ENCODE measurements at regions of chr16 and their contacts with region 1.

Region 1: GRCh38 chr16:30445408-30446202 is at the start of gene SEPHS2:
- DNase-seq: peak; percentile 98
- ATAC-seq: peak; percentile 96 to 98 (median 97)
- H3K4me3 ChIP-seq: peak within 1 kb of the TSS; percentile 70 to 98 (median 80)
- H3K27ac ChIP-seq: peak within 1 kb of the TSS; percentile 69 to 100 (median 96)
- H3K4me1 ChIP-seq: peaks cover 2 to 39% (median 18%) of the 10 kb centered on the region in 9 donors
- H3K27me3 ChIP-seq: no peaks in the 10 kb centered on the region
- CTCF ChIP-seq: peak in 8 of 9 donors; percentile 18 to 74 (median 52)
- total RNA-seq, gene SEPHS2: 23.5 to 49.3 (median 29.3) TPM

Region 2: DNA sequence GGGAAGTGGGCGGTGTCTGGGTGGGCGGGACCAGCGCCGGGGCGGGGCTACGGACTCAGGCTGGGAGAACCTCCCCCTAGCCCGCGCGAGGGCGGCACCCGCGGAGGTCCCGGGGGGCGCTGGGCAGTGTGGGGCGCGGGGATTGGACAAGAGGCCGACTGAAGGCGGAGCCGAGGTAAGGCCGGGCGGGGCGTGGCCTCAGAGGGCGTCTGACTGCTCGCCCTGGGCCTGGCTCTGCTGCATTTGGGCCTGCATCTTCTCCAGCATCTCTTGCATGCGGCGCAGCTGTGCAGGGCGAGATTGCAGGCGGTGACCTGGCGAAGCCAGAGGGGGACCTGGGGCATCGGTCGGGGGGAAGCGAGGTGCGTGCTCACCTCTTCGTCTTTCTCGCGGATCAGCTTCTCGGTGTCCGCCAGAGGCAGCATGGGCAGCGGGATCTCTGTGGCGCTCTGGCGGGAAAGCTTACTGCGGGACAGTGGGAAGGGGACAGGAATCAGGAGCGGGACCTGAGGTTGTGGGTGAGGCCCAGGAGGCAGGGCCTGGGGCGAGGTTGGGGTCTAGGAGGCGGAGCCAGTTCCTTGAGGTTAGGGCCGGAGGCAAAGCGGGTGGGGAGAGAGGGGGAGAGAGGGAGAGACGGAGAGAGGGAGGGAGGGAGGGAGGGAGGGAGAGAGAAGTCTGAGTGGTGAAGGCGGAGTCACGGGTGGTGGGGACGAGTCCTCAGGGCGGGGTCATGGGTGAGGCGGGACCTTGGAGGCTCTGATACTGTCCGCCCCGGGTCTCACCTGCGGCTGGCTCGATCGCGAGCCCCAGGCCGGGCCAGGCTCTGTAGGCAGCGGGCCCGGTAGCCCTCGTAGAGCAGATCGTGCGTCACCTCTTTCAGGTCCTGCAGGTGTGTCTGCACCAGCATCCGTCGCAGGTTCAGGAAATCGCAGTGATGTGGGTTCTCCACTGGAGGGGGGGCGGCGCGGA is 67.1 kb before region 1 on chr16:
- intact Hi-C with region 1: no loop called
- DNase-seq: peak; percentile 99 to 100
- ATAC-seq: peak; percentile 96 to 98 (median 98)
- H3K4me3 ChIP-seq: peak overlapping the region; percentile 32 to 94 (median 68)
- H3K27ac ChIP-seq: peak overlapping the region; percentile 98 to 100 (median 99)
- H3K4me1 ChIP-seq: peaks cover 10 to 29% (median 15%) of the 10 kb centered on the region in 9 donors
- H3K27me3 ChIP-seq: no peaks in the 10 kb centered on the region
- CTCF ChIP-seq: peak in 4 of 9 donors; percentile 12 to 42 (median 22)

Region 3: DNA sequence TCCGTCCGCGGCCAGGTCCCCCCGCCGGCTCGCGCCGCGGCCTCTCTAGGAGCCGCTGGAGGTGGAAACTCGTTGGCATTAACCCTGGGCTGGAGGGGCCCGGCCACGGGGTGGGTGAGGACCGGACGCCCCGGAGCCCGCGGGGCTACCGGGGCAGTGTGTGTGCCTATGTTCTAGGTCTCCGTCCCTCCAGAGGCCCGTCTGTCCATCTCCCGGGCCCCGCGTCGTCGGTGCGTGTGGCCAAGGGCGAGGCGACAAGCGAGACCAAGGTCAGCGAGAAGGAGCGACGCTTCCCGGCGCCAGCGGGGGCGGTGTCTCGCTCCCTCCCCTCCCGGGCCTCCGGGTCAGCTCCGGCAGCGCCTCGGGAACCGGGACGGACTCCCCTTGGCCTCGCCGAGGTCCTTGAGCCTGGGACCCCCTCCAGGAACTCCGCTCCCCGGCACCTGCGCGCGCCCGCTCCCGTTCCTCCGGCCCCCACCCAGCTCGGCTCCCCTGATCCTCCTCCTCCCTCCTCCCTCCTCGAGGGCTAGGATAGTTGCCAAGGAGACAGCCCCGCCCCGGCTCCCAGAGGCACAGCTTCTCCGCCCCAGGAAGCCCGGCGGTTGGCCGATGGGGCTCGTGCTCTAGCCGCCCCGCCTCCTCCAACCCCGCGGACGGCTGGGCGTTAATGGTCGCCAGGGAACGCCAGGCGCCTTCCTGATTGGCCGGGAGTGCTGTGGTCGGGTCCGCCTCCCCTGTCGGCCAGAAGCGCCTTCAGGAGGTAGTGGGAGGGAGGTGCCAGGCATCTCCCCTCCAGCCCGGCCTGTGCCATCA is 81.4 kb after region 1 on chr16:
- intact Hi-C with region 1: loop called in 7 of 10 experiments (anchors 2 to 10 kb)
- DNase-seq: peak; percentile 98 to 99
- ATAC-seq: peak; percentile 92 to 97 (median 95)
- H3K4me3 ChIP-seq: peak overlapping the region; percentile 52 to 87 (median 71)
- H3K27ac ChIP-seq: peak overlapping the region; percentile 94 to 100 (median 99)
- H3K4me1 ChIP-seq: peaks cover 8 to 43% (median 38%) of the 10 kb centered on the region in 9 donors
- H3K27me3 ChIP-seq: no peaks in the 10 kb centered on the region
- CTCF ChIP-seq: peak in 6 of 9 donors; percentile 23 to 50 (median 33)

Region 4: DNA sequence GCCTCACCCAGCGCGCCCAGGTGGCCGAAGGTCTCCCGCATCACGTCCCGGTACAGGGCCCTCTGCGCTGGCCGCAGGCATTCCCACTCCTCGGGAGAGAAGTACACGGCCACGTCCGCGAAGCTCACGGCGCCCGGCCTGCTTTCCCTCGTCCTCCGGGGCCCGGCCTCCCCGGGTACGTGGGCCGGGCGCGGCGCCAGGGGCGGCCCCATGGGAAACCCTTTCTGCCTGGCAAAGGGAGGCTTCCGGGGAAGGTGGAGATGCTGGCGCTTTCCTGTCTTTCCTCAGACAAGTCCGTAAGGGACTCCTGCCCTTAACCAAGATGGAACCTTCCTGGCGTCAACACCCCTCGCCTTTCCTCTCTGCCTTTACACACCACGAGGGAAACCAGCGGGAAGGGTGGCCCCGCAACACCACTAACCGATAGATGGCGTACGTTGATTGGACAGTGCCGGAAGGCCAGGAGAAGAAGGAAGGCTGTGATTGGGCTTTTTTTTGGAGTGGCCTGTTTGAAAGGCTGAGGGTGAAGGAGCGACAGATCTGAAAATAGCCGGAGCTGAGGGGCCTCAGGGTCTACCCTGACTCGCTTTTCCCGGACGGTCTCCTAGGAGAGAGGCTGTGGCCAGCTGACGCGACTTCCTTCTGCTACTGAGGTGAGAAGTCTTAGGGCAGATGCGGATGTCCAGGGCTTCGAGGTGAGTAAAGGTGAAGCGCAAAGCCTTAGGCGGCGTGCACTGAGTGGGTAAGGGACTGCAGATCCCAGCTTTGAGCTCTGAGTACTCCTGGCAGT is 140.0 kb after region 1 on chr16 and contains the start of gene ZNF785:
- intact Hi-C with region 1: loop called in 1 of 10 experiments (anchors 5 kb)
- DNase-seq: peak; percentile 91 to 99
- ATAC-seq: peak; percentile 98 to 100 (median 99)
- H3K4me3 ChIP-seq: peak within 1 kb of the TSS; percentile 63 to 93 (median 78)
- H3K27ac ChIP-seq: peak within 1 kb of the TSS; percentile 67 to 97 (median 94)
- H3K4me1 ChIP-seq: peaks cover 3 to 26% (median 13%) of the 10 kb centered on the region in 9 donors
- H3K27me3 ChIP-seq: no peaks in the 10 kb centered on the region
- CTCF ChIP-seq: peak in 7 of 9 donors; percentile 19 to 54 (median 42)
- total RNA-seq, gene ZNF785: 2.8 to 8.4 (median 5.4) TPM

Region 5: GRCh38 chr16:30609926-30610839 is 164.6 kb after region 1 on chr16 and contains the start of gene ZNF689:
- intact Hi-C with region 1: loop called in 4 of 10 experiments (anchors 5 to 10 kb)
- DNase-seq: peak; percentile 91 to 96
- ATAC-seq: peak; percentile 96 to 99 (median 99)
- H3K4me3 ChIP-seq: peak within 1 kb of the TSS; percentile 51 to 98 (median 93)
- H3K27ac ChIP-seq: peak within 1 kb of the TSS; percentile 66 to 99 (median 98)
- H3K4me1 ChIP-seq: peaks cover 0 to 33% (median 15%) of the 10 kb centered on the region in 9 donors
- H3K27me3 ChIP-seq: no peaks in the 10 kb centered on the region
- CTCF ChIP-seq: no peak
- total RNA-seq, gene ZNF689: 4.0 to 7.4 (median 5.6) TPM

Region 6: DNA sequence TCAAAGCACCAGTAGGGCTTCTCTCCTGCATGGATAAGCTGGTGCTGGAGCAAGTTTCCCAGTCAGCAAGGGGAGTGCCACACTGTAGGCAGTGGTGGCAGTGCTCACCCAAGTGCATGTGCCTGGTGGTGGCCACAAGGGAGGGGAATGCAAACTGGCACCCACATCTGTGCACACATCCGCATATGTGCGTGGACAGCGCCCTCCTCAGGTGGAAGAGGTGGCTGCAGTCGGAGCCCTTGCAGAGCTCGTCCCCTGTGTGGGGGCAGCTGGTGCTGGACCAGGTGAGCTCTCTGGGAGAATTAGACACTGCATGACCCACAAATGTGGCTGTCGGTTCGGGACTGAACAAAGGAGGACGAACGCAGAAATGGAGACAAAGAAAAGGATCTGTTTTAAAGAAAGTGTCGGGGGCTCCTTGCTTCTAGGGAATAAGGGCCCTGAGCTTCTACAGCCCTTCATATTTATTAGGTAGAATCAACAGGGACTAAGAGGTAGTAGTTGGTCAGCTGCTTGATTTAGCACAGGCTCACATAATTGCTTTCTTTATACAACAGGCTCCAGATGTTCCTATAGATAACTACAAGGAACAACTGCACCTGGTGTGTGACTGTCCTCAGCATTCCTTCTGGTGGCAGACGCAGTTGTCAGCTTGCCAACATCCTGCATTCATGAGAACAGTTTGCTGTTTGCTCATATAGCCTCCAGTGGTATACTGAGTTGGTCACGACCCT is 169.9 kb after region 1 on chr16:
- intact Hi-C with region 1: loop called in 2 of 10 experiments (anchors 5 to 10 kb)
- DNase-seq: peak; percentile 40 to 67
- ATAC-seq: peak in 6 of 8 donors; percentile 31 to 78 (median 59)
- H3K4me3 ChIP-seq: no peak overlapping the region
- H3K27ac ChIP-seq: no peak overlapping the region
- H3K4me1 ChIP-seq: peaks cover 0 to 9% (median 5%) of the 10 kb centered on the region in 9 donors
- H3K27me3 ChIP-seq: no peaks in the 10 kb centered on the region
- CTCF ChIP-seq: peak; percentile 35 to 68 (median 52)

Region 7: GRCh38 chr16:30637942-30638341 is 192.3 kb after region 1 on chr16:
- intact Hi-C with region 1: loop called in 2 of 10 experiments (anchors 10 kb)
- DNase-seq: no peak
- ATAC-seq: no peak
- H3K4me3 ChIP-seq: no peak overlapping the region
- H3K27ac ChIP-seq: no peak overlapping the region
- H3K4me1 ChIP-seq: peaks cover 0 to 25% (median 11%) of the 10 kb centered on the region in 9 donors
- H3K27me3 ChIP-seq: no peaks in the 10 kb centered on the region
- CTCF ChIP-seq: peak in 6 of 9 donors; percentile 12 to 39 (median 27)

Region 8: DNA sequence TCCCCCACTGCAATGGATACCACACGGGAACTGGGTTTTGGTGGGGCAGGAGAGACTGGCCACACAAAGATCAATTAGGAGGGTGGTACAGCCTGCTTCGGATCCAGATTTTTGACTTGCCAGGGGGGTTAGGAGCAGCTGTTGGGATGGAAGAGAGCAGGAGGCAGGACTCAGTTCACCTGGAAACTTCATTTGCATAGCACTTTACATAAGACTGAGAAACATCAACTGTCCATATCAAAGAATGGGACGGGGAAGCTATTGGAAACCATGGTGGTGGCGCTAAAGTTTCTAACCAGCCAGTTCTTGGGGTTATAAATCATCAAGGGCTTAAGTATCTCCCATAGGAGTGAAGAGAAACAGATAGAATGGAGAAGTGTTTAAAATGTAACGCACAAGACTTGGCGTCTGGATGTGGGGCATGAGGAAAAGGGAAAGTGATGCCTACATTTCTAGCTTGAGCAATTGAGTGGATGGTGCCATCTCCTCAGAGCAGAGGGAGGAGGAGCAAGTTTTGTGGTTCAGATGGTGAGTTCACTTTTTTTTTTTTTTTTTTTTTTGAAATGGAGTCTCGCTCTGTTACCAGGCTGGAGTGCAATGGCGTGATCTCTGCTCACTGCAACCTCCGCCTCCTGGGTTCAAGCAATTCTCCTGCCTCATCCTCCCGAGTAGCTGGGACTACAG is 246.9 kb after region 1 on chr16:
- intact Hi-C with region 1: loop called in 1 of 10 experiments (anchors 5 kb)
- DNase-seq: no peak
- ATAC-seq: no peak
- H3K4me3 ChIP-seq: no peak overlapping the region
- H3K27ac ChIP-seq: no peak overlapping the region
- H3K4me1 ChIP-seq: peaks cover 0 to 19% (median 8%) of the 10 kb centered on the region in 9 donors
- H3K27me3 ChIP-seq: peaks cover 0 to 3% (median 0%) of the 10 kb centered on the region in 7 donors
- CTCF ChIP-seq: no peak